K562 (cell line): ENCODE measurements at regions of chr9 and their contacts with region 1.

Region 1: GRCh38 chr9:78121488-78121887 is 89.9 kb upstream of the GNAQ start:
- DNase-seq: peak; percentile 31 to 65 (median 36)
- ATAC-seq: peak; percentile 66; the same call in 2 of the 3 replicates
- H3K4me3 ChIP-seq: no peak overlapping the region
- H3K27ac ChIP-seq: no peak overlapping the region
- H3K4me1 ChIP-seq: no peaks in the 10 kb centered on the region
- H3K27me3 ChIP-seq: no peaks in the 10 kb centered on the region
- CTCF ChIP-seq: peak; percentile 48 to 80 (median 61); a peak in 5 of 6 replicates
- EP300 ChIP-seq: no peak
- POLR2A ChIP-seq: no peak
- RAD21 ChIP-seq: peak; percentile 64 to 75

Region 2: GRCh38 chr9:76893395-76893932 is 1228.0 kb before region 1 on chr9:
- CTCF ChIA-PET with region 1: no interaction called
- POLR2A ChIA-PET with region 1: no interaction called
- in situ Hi-C with region 1: no loop called
- intact Hi-C with region 1: no loop called
- DNase-seq: no peak
- ATAC-seq: no peak
- H3K4me3 ChIP-seq: no peak overlapping the region
- H3K27ac ChIP-seq: no peak overlapping the region
- H3K4me1 ChIP-seq: no peaks in the 10 kb centered on the region
- H3K27me3 ChIP-seq: no peaks in the 10 kb centered on the region; a peak in 1 of 5 replicates
- CTCF ChIP-seq: no peak
- EP300 ChIP-seq: no peak
- POLR2A ChIP-seq: no peak
- RAD21 ChIP-seq: no peak

Region 3: DNA sequence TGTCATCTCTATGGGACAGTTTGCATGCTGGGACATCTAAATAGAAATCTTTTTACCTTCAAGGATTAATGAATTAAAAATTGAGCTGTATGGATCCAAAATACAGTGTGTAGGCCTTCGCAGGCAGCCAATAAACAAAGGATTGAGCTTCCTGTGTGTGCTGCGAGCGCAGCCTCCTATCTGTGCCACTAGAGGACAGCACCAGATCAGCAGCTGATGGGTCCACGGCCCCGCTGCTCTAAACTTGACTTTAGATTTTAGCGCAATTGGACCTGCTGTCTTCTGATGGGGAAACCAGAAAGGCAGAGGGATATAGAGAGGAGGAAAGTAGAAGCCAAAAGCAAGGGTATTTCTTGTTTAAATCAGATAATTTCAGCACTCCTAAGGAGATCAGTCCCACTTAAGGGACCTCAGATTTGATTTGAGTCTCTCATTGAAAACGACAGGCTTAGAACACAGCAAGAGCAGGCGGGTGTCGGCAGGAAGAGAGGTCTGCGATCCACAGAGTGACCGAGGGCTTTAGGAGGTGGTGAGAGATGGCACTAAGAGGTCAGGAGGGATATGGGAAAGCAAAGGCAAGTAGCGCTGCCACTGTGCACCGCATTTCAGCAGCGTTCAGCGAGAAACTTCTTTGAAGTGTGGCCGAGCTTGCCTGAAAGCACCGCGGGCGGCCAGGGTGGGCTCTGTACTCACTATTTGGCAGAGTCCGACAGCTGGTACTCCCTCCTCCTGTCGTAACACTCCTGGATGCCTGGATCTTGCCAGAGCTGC is 687.6 kb before region 1 on chr9:
- CTCF ChIA-PET with region 1: no interaction called
- POLR2A ChIA-PET with region 1: no interaction called
- in situ Hi-C with region 1: loop called (anchors 10 kb)
- intact Hi-C with region 1: loop called (anchors 5 kb)
- DNase-seq: peak; percentile 49 to 65 (median 60)
- ATAC-seq: peak; percentile 97
- H3K4me3 ChIP-seq: no peak overlapping the region
- H3K27ac ChIP-seq: no peak overlapping the region
- H3K4me1 ChIP-seq: no peaks in the 10 kb centered on the region; a peak in 1 of 5 replicates
- H3K27me3 ChIP-seq: peaks cover 5 to 35% of the 10 kb centered on the region in 2 experiments; a peak in 4 of 5 replicates
- CTCF ChIP-seq: peak; percentile 82 to 89 (median 87)
- EP300 ChIP-seq: no peak
- POLR2A ChIP-seq: no peak
- RAD21 ChIP-seq: peak; percentile 80 to 83

Region 4: GRCh38 chr9:77456829-77457437 is 664.6 kb before region 1 on chr9:
- CTCF ChIA-PET with region 1: no interaction called
- POLR2A ChIA-PET with region 1: no interaction called
- in situ Hi-C with region 1: no loop called
- intact Hi-C with region 1: loop called (anchors 5 kb)
- DNase-seq: peak; percentile 72 to 84 (median 76)
- ATAC-seq: peak; percentile 92
- H3K4me3 ChIP-seq: no peak overlapping the region
- H3K27ac ChIP-seq: no peak overlapping the region
- H3K4me1 ChIP-seq: no peaks in the 10 kb centered on the region; a peak in 1 of 5 replicates
- H3K27me3 ChIP-seq: peaks cover 0 to 17% of the 10 kb centered on the region in 2 experiments; a peak in 1 of 5 replicates
- CTCF ChIP-seq: peak; percentile 69 to 75 (median 73)
- EP300 ChIP-seq: no peak
- POLR2A ChIP-seq: no peak
- RAD21 ChIP-seq: peak; percentile 21 to 47; a peak in 2 of 4 replicates

Region 5: GRCh38 chr9:77673941-77674791 is 447.3 kb before region 1 on chr9:
- CTCF ChIA-PET with region 1: no interaction called
- POLR2A ChIA-PET with region 1: no interaction called
- in situ Hi-C with region 1: no loop called
- intact Hi-C with region 1: loop called (anchors 10 kb)
- DNase-seq: no peak
- ATAC-seq: peak; percentile 57; the same call in 2 of the 3 replicates
- H3K4me3 ChIP-seq: no peak overlapping the region
- H3K27ac ChIP-seq: no peak overlapping the region
- H3K4me1 ChIP-seq: no peaks in the 10 kb centered on the region
- H3K27me3 ChIP-seq: no peaks in the 10 kb centered on the region; a peak in 2 of 5 replicates
- CTCF ChIP-seq: peak in 1 of 3 experiments; percentile 37; a peak in 2 of 6 replicates
- EP300 ChIP-seq: no peak
- POLR2A ChIP-seq: no peak
- RAD21 ChIP-seq: peak in 1 of 2 experiments; percentile 27; a peak in 2 of 4 replicates

Region 6: DNA sequence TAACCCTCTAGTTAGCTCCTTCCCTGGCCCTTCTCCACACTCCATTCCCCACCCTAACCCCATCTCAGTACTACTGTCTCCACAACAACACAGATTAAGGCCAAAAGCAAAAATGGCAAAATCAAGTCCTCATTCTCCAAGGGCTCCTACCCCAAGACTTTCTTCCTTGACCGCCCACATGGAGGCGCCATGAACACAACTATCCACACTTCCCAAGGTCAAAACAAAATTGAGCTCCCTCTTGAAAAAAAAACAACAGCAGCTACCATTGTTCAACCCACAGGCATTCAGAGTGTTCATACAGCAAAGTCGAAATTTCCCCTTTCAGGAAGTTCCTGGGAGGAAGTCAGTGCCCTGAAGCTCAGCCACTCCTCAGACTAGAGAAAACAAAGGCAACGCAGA is 144.3 kb before region 1 on chr9:
- CTCF ChIA-PET with region 1: interaction called, 4 read pairs
- POLR2A ChIA-PET with region 1: no interaction called
- in situ Hi-C with region 1: loop called (anchors 10 kb)
- intact Hi-C with region 1: loop called (anchors 1 kb)
- DNase-seq: peak; percentile 28 to 73 (median 41)
- ATAC-seq: peak; percentile 80
- H3K4me3 ChIP-seq: no peak overlapping the region
- H3K27ac ChIP-seq: peak overlapping the region; percentile 62; the same call in 1 of the 3 replicates
- H3K4me1 ChIP-seq: peaks cover 10 to 36% of the 10 kb centered on the region in 2 experiments; a peak in 4 of 5 replicates
- H3K27me3 ChIP-seq: no peaks in the 10 kb centered on the region
- CTCF ChIP-seq: peak; percentile 57 to 75 (median 68)
- EP300 ChIP-seq: no peak
- POLR2A ChIP-seq: no peak
- RAD21 ChIP-seq: peak; percentile 72 to 85

Region 7: GRCh38 chr9:78369639-78370219 is 248.2 kb after region 1 on chr9:
- CTCF ChIA-PET with region 1: no interaction called
- POLR2A ChIA-PET with region 1: no interaction called
- in situ Hi-C with region 1: no loop called
- intact Hi-C with region 1: loop called (anchors 10 kb)
- DNase-seq: peak; percentile 55 to 73 (median 62)
- ATAC-seq: peak; percentile 98
- H3K4me3 ChIP-seq: no peak overlapping the region
- H3K27ac ChIP-seq: no peak overlapping the region
- H3K4me1 ChIP-seq: no peaks in the 10 kb centered on the region; a peak in 2 of 5 replicates
- H3K27me3 ChIP-seq: peaks cover 2 to 11% of the 10 kb centered on the region in 2 experiments; a peak in 3 of 5 replicates
- CTCF ChIP-seq: peak; percentile 73 to 83 (median 74)
- EP300 ChIP-seq: no peak
- POLR2A ChIP-seq: no peak
- RAD21 ChIP-seq: peak; percentile 38 to 68